ENCODE measurements at regions of chr1 and their contacts with region 1.

Region 1: GRCh38 chr1:52296345-52296744 is 69.7 kb downstream of the CC2D1B start:
- DNase-seq: peak; percentile 38
- H3K4me3 ChIP-seq: no peak overlapping the region
- H3K27ac ChIP-seq: no peak overlapping the region
- H3K27me3 ChIP-seq: no peaks in the 10 kb centered on the region
- CTCF ChIP-seq: peak; percentile 84

Region 2: DNA sequence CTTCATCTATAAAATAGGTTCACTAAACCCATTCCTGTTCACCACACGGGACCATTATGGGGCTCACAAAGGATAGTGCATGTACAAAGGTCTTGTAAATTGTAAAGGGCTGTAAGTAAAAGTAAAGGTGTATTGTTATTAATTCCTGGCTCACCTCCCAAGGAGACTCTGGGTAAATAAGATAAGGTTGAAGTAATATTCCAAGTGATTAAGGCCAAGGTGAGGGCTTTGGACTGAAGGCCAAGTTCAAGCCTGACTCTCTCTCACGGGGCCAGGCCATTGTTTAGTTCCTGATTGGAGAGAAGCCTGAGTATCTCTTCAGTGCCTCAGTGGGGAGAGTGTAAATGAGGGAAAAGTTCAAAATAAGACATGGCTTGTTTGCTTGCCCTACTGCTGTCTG is 174.0 kb before region 1 on chr1:
- CTCF ChIA-PET with region 1: interaction called, 70 read pairs
- POLR2A ChIA-PET with region 1: interaction called, 3 read pairs
- DNase-seq: no peak
- H3K4me3 ChIP-seq: no peak overlapping the region
- H3K27ac ChIP-seq: no peak overlapping the region
- H3K27me3 ChIP-seq: peaks cover 5% of the 10 kb centered on the region
- CTCF ChIP-seq: no peak

Region 3: GRCh38 chr1:52127181-52128180 is 168.9 kb before region 1 on chr1:
- CTCF ChIA-PET with region 1: interaction called, 70 read pairs
- POLR2A ChIA-PET with region 1: no interaction called
- DNase-seq: peak; percentile 44
- H3K4me3 ChIP-seq: no peak overlapping the region
- H3K27ac ChIP-seq: no peak overlapping the region
- H3K27me3 ChIP-seq: peaks cover 4% of the 10 kb centered on the region
- CTCF ChIP-seq: peak; percentile 82

Region 4: GRCh38 chr1:52253401-52253800 is 42.9 kb before region 1 on chr1:
- CTCF ChIA-PET with region 1: interaction called, 4 read pairs
- POLR2A ChIA-PET with region 1: interaction called, 12 read pairs
- DNase-seq: no peak
- H3K4me3 ChIP-seq: no peak overlapping the region
- H3K27ac ChIP-seq: no peak overlapping the region
- H3K27me3 ChIP-seq: no peaks in the 10 kb centered on the region
- CTCF ChIP-seq: no peak

Region 5: GRCh38 chr1:52306227-52307006 is 10.1 kb after region 1 on chr1:
- CTCF ChIA-PET with region 1: interaction called, 17 read pairs
- POLR2A ChIA-PET with region 1: no interaction called
- DNase-seq: no peak
- H3K4me3 ChIP-seq: no peak overlapping the region
- H3K27ac ChIP-seq: no peak overlapping the region
- H3K27me3 ChIP-seq: no peaks in the 10 kb centered on the region
- CTCF ChIP-seq: no peak